Left lung (tissue), 14 donors: ENCODE measurements at regions of chr17 and their contacts with region 1.

Region 1: DNA sequence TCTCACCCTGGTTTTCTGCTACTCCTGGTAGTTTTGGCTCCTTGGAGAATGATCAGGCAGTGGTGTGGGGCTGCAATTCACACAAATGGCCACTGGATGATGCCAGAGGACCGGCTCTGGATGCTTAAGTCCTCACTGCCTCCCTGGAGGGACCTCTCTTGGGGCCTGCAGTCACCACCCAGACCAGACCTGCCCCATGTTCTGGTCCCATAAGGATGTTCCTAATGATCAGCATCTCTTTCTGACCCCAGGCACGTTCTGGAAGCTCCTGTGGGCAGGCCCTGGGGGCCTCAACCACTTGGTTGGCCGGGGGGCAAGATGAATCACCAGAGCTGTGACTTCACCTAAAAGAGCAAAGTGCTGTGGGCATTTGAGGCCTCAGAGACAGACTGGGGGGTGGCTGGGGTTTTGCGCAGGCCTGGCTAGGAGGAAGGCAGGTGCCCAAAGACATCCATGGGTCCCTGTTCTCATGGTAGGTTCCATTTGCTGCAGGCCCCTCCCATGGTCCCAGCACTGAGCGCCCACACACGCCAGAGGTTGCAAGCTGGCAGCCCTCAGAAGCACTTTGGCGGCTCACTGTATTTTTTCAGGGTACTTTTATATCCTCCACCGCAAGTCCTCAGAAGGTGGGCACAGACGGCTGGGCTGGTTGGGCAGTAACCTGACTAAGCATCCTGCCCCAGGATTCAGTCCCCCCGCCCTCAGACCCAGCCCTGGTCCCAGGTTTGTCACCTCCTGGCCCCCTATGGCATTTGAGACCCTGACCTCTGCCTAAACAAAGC is 53.2 kb downstream of the NT5M start:
- DNase-seq: peak in 3 of 4 donors; percentile 63 to 90 (median 78)
- ATAC-seq: peak; percentile 97
- H3K4me3 ChIP-seq: no peak overlapping the region
- H3K27ac ChIP-seq: no peak overlapping the region
- H3K4me1 ChIP-seq: peaks cover 6% of the 10 kb centered on the region in 2 donors
- H3K27me3 ChIP-seq: peaks cover 0 to 11% of the 10 kb centered on the region in 2 donors
- CTCF ChIP-seq: peak; percentile 95 to 99

Region 2: DNA sequence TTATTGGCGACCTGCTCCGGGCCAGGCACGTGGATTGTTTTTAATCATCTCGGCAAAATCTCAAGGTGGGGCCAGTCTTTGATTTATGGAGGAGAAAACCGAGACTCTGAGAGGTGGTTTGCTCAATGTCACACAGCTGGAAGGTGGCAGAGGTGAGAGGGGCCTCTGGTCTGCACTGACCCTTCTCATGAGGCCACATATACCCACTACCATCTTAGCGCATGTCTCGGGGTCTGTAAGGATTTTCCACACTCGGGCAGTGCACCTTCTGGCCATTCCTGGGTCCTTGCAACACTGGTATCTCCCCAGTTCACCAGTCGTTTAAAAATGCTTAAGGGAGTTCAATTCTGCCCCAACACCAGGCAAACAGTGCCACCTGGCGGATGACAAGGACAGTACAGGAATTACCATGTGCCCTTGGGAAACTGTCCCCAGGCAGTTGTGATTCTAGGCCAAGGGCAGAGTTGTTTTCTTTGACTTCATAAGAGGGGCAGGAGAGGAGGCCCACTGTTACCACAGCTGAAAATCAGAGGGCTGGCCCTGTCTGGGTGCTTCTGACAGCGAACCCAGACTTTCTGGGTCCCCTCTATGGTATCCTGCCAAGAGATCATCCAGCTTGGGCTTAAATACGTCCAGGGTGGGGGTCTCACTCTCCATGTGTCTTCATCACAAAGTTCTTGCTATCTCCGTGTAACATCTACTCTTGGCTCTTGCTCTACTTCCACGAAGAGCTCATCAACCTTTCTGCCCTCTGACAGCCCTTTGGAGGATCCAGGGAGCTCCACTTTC is 285.5 kb after region 1 on chr17:
- intact Hi-C with region 1: loop called (anchors 2 to 5 kb)
- DNase-seq: peak in 3 of 4 donors; percentile 81 to 88 (median 81)
- ATAC-seq: peak; percentile 95
- H3K4me3 ChIP-seq: no peak overlapping the region
- H3K27ac ChIP-seq: no peak overlapping the region
- H3K4me1 ChIP-seq: peaks cover 0 to 22% of the 10 kb centered on the region in 2 donors
- H3K27me3 ChIP-seq: no peaks in the 10 kb centered on the region
- CTCF ChIP-seq: peak; percentile 75 to 93